ENCODE measurements at regions of chr1 and their contacts with region 1.

Region 1: GRCh38 chr1:205273551-205273982 is 45.8 kb downstream of the TMCC2 start:
- ATAC-seq: peak; percentile 62 to 96 (median 80)
- H3K4me3 ChIP-seq: no peak overlapping the region
- H3K27ac ChIP-seq: no peak overlapping the region
- H3K4me1 ChIP-seq: peaks cover 25 to 28% of the 10 kb centered on the region in 2 donors

Region 2: DNA sequence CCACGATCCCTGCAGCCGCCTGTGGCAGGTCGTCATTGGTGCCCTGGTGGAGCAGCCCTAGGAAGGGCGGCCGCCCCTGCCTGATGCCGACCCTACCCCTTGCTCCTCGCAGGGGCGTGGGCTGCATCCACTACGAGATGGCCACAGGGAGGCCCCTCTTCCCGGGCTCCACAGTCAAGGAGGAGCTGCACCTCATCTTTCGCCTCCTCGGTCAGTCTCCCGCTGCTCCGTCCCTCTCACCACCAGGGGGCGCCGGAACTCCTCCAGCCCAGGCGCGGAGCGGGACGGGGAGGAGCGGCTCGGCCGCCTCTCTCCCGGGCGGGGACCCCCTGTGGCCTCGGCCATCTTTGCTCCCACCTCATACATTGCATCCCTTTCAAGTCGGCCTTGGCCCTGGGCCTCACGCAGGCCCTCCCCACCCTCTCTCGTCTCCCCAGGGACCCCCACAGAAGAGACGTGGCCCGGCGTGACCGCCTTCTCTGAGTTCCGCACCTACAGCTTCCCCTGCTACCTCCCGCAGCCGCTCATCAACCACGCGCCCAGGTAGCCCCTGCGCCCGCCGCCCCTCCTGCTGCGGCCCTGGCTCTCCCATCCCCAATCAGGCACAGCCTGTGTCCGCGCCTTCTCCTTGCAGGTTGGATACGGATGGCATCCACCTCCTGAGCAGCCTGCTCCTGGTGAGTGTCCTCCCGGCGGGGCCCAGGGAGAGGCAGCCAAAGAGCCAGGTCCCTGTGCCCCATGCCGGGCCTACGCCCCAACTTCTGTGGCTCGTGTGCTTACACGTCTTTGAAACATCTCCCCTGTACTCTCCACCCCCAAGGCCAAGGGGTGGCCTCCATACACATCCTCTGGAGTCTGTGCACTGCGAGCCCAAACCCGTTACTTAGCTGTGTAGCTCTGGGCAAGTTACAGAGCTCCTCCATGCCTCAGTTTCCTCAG is 255.6 kb after region 1 on chr1:
- in situ Hi-C with region 1: loop called in 1 of 9 experiments (anchors 10 kb)
- ATAC-seq: peak; percentile 83 to 94 (median 87)
- H3K4me3 ChIP-seq: peak overlapping the region in 4 of 5 donors; percentile 4 to 23 (median 4)
- H3K27ac ChIP-seq: no peak overlapping the region
- H3K4me1 ChIP-seq: peaks cover 21 to 40% of the 10 kb centered on the region in 2 donors